Heart left ventricle (tissue), 16 donors: ENCODE measurements at regions of chr10 and their contacts with region 1.

Region 1: DNA sequence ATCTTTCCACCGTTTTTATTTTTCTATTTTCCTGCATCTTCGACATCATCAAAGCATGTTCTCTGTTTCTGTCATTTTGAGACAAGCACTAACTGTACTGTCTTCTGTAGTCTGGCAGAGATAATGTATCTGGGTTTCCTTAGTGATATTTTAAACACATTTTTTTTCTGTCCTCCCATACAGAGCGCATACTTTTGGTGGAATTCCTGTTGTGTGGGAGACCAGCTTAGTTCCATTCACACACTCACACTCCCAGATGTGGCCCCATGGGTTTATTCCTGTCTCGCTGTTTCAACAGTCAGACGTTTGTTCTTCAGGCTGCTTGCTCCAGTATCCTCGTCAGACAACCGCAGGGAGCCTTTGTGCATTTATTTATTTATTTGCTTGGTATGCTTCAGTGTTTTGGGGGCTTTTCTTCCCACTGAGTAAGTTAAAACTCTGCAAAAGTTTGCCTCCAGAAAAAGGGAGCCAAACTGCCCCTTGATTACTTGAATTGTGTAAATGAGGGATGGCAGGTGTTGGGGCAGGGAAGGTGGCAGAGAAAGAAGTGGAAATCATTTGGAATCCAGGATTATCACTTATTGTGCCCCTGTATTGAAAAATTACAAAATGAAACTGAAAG is 456.8 kb upstream of the KLF6 start:
- DNase-seq: peak in 4 of 5 donors; percentile 72 to 78 (median 76)
- ATAC-seq: peak; percentile 87 to 91 (median 88)
- H3K4me3 ChIP-seq: peak overlapping the region in 11 of 12 donors; percentile 26 to 57 (median 45)
- H3K27ac ChIP-seq: peak overlapping the region; percentile 63 to 96 (median 89)
- H3K4me1 ChIP-seq: peaks cover 0 to 50% (median 41%) of the 10 kb centered on the region in 12 donors
- H3K27me3 ChIP-seq: no peaks in the 10 kb centered on the region
- CTCF ChIP-seq: no peak
- POLR2A ChIP-seq: no peak

Region 2: GRCh38 chr10:3911713-3912442 is 330.0 kb before region 1 on chr10:
- intact Hi-C with region 1: loop called in 1 of 10 experiments (anchors 10 kb)
- DNase-seq: no peak
- ATAC-seq: peak; percentile 87 to 90 (median 89)
- H3K4me3 ChIP-seq: peak overlapping the region in 11 of 12 donors; percentile 6 to 56 (median 48)
- H3K27ac ChIP-seq: peak overlapping the region; percentile 53 to 91 (median 82)
- H3K4me1 ChIP-seq: peaks cover 0 to 36% (median 0%) of the 10 kb centered on the region in 12 donors
- H3K27me3 ChIP-seq: no peaks in the 10 kb centered on the region
- CTCF ChIP-seq: no peak
- POLR2A ChIP-seq: peak in 1 of 2 donors; percentile 30

Region 3: DNA sequence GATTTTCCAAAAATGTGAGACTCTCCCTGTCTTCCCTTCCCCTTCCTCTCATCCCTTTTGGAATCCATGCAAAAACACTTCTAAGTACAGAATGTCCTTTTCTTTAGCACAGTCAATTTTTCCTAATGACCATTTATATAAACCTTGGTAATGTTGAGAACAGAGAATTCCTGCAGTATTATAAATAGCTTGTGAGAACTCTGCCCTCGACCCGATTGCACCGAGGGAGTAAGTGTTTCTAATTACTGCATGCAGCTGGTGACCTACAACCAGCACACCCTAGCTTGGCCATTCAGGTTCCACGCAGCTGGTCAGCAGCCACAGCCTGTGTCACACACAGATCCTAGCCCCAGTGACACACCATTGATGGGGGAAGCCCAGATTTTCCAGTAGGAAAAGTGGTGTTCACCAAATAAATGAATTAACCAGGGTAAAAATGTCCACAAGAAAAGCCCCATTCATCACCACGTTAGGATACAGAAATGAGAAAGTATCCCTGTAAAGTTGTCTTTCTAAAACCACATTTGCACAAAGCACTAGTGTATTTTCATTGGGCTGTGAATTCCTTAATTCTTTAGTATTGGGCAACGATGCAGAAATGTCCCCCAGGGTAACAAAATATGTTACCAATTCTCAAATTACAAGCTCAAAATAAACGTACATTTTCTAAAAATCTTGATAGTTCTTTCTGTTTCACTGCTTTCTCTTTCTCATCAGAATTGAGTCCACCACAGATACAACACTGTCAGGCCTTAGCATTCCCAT is 42.2 kb after region 1 on chr10:
- intact Hi-C with region 1: loop called in 2 of 10 experiments (anchors 2 to 5 kb)
- DNase-seq: peak; percentile 77 to 82 (median 78)
- ATAC-seq: peak; percentile 91 to 94 (median 94)
- H3K4me3 ChIP-seq: no peak overlapping the region
- H3K27ac ChIP-seq: peak overlapping the region; percentile 51 to 87 (median 70)
- H3K4me1 ChIP-seq: peaks cover 0 to 53% (median 21%) of the 10 kb centered on the region in 12 donors
- H3K27me3 ChIP-seq: no peaks in the 10 kb centered on the region
- CTCF ChIP-seq: no peak
- POLR2A ChIP-seq: no peak

Region 4: GRCh38 chr10:4344511-4344994 is 102.7 kb after region 1 on chr10:
- intact Hi-C with region 1: loop called in 3 of 10 experiments (anchors 1 to 10 kb)
- DNase-seq: peak; percentile 65 to 80 (median 65)
- ATAC-seq: peak; percentile 94 to 97 (median 95)
- H3K4me3 ChIP-seq: peak overlapping the region in 3 of 12 donors; percentile 2 to 25 (median 22)
- H3K27ac ChIP-seq: peak overlapping the region; percentile 56 to 84 (median 69)
- H3K4me1 ChIP-seq: peaks cover 0 to 33% (median 18%) of the 10 kb centered on the region in 12 donors
- H3K27me3 ChIP-seq: no peaks in the 10 kb centered on the region
- CTCF ChIP-seq: peak in 5 of 12 donors; percentile 3 to 28 (median 18)
- POLR2A ChIP-seq: no peak

Region 5: GRCh38 chr10:4512671-4513240 is 270.9 kb after region 1 on chr10:
- intact Hi-C with region 1: loop called in 1 of 10 experiments (anchors 10 kb)
- DNase-seq: peak; percentile 51 to 79 (median 69)
- ATAC-seq: peak; percentile 79 to 91 (median 88)
- H3K4me3 ChIP-seq: no peak overlapping the region
- H3K27ac ChIP-seq: peak overlapping the region; percentile 10 to 85 (median 70)
- H3K4me1 ChIP-seq: peaks cover 5 to 48% (median 30%) of the 10 kb centered on the region in 12 donors
- H3K27me3 ChIP-seq: no peaks in the 10 kb centered on the region
- CTCF ChIP-seq: peak; percentile 36 to 68 (median 54)
- POLR2A ChIP-seq: no peak